ENCODE measurements at regions of chr12 and their contacts with region 1.

Region 1: DNA sequence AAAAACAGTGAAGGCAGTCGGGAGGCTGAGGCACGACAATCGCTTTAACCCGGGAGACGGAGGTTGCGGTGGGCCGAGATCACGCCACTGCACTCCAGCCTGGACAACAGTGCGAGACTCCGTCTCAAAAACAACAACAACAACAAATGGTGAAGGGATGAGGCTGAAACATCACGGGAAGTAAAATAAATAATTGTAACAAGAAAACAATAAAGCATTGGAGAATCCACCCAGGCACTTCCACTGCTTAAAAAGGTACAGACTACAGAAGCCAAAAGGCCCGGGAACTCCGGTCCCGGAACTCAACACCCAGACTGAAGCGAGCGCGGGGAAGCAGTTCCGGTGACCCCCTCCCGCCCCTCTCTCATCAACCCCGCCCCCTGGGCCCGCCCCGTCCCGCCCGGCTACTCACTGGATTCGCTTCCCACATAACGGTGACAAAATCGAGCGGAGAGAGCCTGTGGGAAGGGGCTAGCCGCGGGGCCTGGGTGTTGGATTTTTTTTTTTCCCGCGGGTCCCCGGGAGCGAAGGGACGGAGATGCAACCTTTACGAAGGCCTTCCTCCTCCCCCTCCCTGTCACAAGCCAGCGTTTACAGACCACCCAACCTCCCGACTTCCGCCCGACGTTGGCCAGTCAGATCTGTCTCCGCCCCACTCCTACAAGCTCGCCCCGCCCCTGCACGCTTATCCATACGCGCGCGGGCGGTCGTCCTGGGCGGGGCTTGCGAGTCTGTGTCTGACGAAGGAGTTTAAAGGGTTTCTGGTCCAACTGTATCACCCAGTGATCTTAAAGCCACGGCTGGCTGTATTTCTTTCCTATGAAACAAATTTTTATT is at the start of gene PARP11:
- DNase-seq: peak; percentile 100
- H3K4me3 Mint-ChIP-seq: peak within 1 kb of the TSS; percentile 92
- H3K27ac Mint-ChIP-seq: peak within 1 kb of the TSS; percentile 90
- H3K4me1 Mint-ChIP-seq: peaks cover 44% of the 10 kb centered on the region
- H3K27me3 Mint-ChIP-seq: no peaks in the 10 kb centered on the region
- total RNA-seq, gene PARP11: 11.4 and 14.8 TPM in 2 replicates

Region 2: GRCh38 chr12:3752741-3753486 is 120.1 kb before region 1 on chr12 and contains the start of gene CRACR2A:
- intact Hi-C with region 1: loop called (anchors 5 kb)
- DNase-seq: peak; percentile 96
- H3K4me3 Mint-ChIP-seq: peak within 1 kb of the TSS; percentile 90
- H3K27ac Mint-ChIP-seq: peak within 1 kb of the TSS; percentile 98
- H3K4me1 Mint-ChIP-seq: peaks cover 47% of the 10 kb centered on the region
- H3K27me3 Mint-ChIP-seq: no peaks in the 10 kb centered on the region
- total RNA-seq, gene CRACR2A: 26.6 and 27.0 TPM in 2 replicates

Region 3: DNA sequence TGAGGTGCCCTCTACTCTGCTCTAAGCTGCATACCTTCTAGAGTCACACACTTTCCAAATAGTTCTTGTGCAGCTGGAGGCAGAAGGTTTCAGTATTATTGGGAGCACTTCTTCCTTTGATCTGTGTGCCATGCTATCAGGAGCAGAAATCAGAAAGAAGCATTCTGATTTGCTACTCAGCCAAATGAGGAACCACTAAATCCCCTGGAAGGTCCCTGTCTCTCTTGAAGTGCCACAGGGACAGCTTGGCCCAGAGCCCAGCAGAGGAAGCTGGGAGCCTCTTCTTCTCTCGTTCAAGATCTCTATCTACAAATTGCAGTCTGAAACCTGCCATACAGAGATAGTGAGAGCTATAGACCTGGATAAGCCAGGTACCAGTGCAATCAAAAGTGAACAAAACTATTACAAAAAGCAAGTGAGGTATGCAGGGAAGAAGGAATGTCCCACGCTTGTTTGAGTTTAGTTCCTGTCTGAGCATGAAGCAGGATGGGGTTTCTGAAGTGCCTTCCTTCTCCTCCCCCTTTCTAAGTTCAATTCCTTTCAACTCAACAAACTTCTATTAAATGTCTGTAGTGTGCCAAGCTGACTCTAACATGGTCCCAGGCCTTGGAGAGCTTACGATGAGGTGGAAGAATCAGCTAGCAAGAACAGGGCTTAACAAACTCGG is 101.1 kb after region 1 on chr12:
- intact Hi-C with region 1: loop called (anchors 5 kb)
- DNase-seq: peak; percentile 68
- H3K4me3 Mint-ChIP-seq: peak overlapping the region; percentile 68
- H3K27ac Mint-ChIP-seq: peak overlapping the region; percentile 84
- H3K4me1 Mint-ChIP-seq: peaks cover 49% of the 10 kb centered on the region
- H3K27me3 Mint-ChIP-seq: no peaks in the 10 kb centered on the region

Region 4: DNA sequence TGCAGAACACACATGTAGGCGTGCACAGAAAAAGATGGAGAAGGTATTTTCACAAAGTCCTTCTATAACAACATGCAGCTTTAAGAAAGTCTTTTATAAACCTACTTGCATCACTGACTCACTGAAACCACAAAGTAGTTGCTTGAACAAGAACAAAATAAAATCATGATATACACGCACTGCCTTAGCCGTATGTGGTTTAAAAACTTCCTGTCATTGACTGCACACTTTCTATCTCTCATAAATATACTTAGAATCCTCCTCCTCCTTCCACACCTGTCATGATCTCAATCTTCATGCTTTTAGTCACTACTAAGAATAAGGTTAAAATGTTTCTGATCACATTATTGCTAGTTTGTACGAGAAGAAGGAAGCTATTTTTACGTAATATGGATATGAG is 633.9 kb after region 1 on chr12:
- intact Hi-C with region 1: loop called (anchors 2 kb)
- DNase-seq: peak; percentile 83
- H3K4me3 Mint-ChIP-seq: peak overlapping the region; percentile 55
- H3K27ac Mint-ChIP-seq: peak overlapping the region; percentile 59
- H3K4me1 Mint-ChIP-seq: peaks cover 20% of the 10 kb centered on the region
- H3K27me3 Mint-ChIP-seq: no peaks in the 10 kb centered on the region

Region 5: GRCh38 chr12:4829161-4829792 is 956.3 kb after region 1 on chr12:
- intact Hi-C with region 1: loop called (anchors 10 kb)
- DNase-seq: peak; percentile 78
- H3K4me3 Mint-ChIP-seq: peak overlapping the region; percentile 92
- H3K27ac Mint-ChIP-seq: peak overlapping the region; percentile 99
- H3K4me1 Mint-ChIP-seq: peaks cover 65% of the 10 kb centered on the region
- H3K27me3 Mint-ChIP-seq: no peaks in the 10 kb centered on the region

Measured in activated CD4-positive, alpha-beta T cell treated with anti-CD3 and anti-CD28 coated beads, Interleukin-2, amount 10 ng/mL, durations not matched to agents 24 days and 14 days (primary cell).